ENCODE measurements at regions of chr1 and their contacts with region 1.

Region 1: GRCh38 chr1:182604169-182605164 is at the start of gene RGS16:
- DNase-seq: peak; percentile 96
- H3K4me3 ChIP-seq: peak within 1 kb of the TSS; percentile 65
- H3K27ac ChIP-seq: peak within 1 kb of the TSS; percentile 39
- H3K4me1 ChIP-seq: peaks cover 48% of the 10 kb centered on the region
- H3K27me3 ChIP-seq: no peaks in the 10 kb centered on the region
- CTCF ChIP-seq: no peak
- total RNA-seq, gene RGS16: 22.1 and 23.1 TPM in 2 replicates

Region 2: DNA sequence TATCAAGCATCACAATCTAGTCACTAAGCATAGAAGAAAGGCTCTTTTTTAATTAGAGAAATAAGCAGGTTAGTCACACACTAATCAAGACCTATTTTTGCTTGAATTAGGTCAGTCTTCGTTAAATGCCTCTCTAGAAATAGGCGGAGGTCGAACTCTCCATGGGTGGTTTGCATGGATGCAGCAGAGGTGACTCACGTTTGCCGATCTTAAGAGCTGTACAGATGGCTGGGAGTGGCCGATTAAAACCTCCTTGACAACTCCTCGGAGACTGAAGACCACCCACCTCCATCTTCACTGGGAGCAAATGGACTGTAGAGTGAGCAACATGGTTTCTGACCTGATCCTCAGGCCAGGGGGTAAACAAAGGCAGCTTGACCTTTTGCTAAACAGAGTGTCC is 792.3 kb before region 1 on chr1:
- CTCF ChIA-PET with region 1: no interaction called
- POLR2A ChIA-PET with region 1: no interaction called
- intact Hi-C with region 1: no loop called
- DNase-seq: no peak
- H3K4me3 ChIP-seq: no peak overlapping the region
- H3K27ac ChIP-seq: no peak overlapping the region
- H3K4me1 ChIP-seq: no peaks in the 10 kb centered on the region
- H3K27me3 ChIP-seq: peaks cover 54% of the 10 kb centered on the region
- CTCF ChIP-seq: no peak

Region 3: DNA sequence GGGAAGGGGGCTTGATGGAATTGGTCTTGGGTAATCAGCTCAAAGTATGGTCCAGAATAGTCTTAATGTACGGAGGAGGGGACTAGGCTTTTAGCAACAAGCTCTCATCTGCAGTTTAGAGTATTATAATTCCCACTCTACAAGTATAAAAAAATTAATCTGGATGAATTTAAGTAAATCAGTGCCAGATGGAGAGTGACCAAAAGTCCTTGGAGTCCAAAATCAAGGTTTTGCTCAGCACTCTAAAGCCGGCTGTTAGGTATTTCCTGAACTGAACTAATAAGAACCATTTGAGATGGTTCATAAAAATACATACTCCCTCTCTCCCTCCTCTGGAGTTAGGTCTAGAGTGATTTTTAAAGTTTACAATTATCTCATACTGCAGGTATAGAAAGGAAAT is 236.5 kb before region 1 on chr1:
- CTCF ChIA-PET with region 1: no interaction called
- POLR2A ChIA-PET with region 1: no interaction called
- intact Hi-C with region 1: no loop called
- DNase-seq: no peak
- H3K4me3 ChIP-seq: no peak overlapping the region
- H3K27ac ChIP-seq: no peak overlapping the region
- H3K4me1 ChIP-seq: no peaks in the 10 kb centered on the region
- H3K27me3 ChIP-seq: peaks cover 30% of the 10 kb centered on the region
- CTCF ChIP-seq: no peak

Region 4: DNA sequence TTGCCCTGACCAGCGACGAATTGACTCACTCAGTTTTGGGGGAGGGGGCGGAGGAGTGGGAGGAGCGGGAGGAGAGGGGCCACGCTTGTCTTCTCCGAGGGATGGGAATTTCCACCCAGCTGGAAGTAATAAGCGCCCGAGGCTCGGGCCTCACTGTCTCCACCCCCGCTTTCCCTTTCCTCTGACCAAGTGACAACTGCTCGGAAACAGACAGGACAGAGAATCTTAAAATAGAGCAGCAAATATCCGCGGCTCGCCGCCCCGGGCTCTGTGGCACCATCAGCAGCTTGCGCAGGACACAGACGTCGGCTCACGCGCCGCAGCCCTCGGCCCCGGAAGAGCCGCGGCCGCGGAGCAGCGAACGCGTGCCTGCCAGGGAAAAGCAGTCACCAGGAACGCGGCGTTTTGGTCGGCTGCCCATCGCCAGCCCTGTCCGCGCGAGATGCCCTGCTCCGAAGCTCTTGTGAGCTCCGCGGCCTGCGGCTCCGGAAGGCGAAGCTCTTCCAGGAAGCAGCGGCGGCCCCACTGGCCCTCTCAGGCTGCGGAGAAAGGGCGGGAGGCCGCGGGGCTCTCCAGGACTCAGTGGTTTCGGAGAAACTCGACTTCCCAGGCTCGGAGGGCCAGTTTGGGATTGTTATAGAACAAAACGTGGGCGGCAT is 10.5 kb after region 1 on chr1:
- CTCF ChIA-PET with region 1: interaction called, 3 read pairs
- POLR2A ChIA-PET with region 1: interaction called, 14 read pairs
- intact Hi-C with region 1: loop called (anchors 1 kb)
- DNase-seq: peak; percentile 97
- H3K4me3 ChIP-seq: peak overlapping the region; percentile 50
- H3K27ac ChIP-seq: peak overlapping the region; percentile 100
- H3K4me1 ChIP-seq: peaks cover 81% of the 10 kb centered on the region
- H3K27me3 ChIP-seq: no peaks in the 10 kb centered on the region
- CTCF ChIP-seq: peak; percentile 32; the same call in 1 of the 2 replicates

Region 5: DNA sequence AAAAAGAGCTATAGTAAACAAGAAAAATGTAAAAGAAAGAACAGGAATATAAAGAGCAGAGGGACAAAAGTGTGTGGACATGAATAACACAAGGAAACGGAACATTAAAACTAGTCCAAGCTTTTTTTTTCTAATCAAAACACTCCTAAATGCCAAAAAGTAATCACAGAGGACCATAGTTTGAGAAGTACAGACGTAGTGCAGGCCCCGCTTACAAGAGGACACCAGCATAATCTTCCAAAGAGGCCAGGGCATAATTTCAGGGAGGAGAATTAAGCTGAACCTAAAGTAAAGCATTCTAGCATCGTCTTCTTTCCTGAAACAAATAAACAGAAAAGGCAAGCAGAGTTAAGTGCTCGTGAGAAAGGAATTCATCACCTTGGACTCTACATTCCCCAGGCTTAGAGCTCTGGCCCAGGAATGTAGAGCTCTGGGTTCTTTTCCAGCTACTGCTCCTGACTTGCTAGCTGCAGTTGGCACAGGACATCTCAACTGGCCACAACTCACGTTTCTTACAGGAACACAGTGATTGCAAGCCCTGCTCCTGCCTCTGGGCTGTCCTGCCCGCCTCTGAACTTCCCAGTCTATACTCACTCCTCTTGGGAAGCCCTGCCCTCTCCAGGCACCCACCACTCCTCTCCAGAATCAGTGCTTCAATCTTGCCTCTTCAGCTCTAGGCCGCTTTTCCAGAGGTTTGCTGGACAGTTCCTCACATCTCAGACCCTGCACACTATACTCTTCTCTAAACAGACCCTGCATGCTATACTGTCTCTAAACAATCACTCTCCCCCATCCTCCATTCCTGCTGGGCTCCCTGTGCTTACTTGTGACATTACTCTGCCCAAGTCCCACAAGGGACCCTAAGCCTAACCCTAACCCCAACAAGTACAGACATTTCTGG is 70.1 kb after region 1 on chr1:
- CTCF ChIA-PET with region 1: no interaction called
- POLR2A ChIA-PET with region 1: no interaction called
- intact Hi-C with region 1: loop called (anchors 5 kb)
- DNase-seq: no peak
- H3K4me3 ChIP-seq: no peak overlapping the region
- H3K27ac ChIP-seq: no peak overlapping the region
- H3K4me1 ChIP-seq: peaks cover 12% of the 10 kb centered on the region
- H3K27me3 ChIP-seq: no peaks in the 10 kb centered on the region
- CTCF ChIP-seq: no peak

Region 6: DNA sequence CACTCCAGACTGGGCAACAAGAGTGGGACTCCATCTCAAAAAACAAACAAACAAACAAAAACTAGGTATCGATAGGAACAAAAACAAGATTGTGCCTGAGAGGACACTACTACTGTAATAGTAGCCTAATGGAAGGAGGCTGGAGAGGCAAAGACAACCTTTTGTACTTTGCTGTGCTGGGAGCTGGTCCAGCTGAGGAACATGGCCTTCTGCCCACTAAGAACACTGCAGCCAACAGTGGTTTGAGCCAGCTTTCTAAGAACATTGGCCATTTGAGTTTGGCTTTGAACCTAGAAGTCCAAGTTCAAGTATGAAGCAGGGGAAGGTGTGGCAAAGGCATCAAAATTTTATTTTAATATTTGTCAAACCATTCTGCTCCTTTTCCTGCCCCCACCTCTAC is 102.7 kb after region 1 on chr1:
- CTCF ChIA-PET with region 1: no interaction called
- POLR2A ChIA-PET with region 1: no interaction called
- intact Hi-C with region 1: no loop called
- DNase-seq: no peak
- H3K4me3 ChIP-seq: no peak overlapping the region
- H3K27ac ChIP-seq: no peak overlapping the region
- H3K4me1 ChIP-seq: no peaks in the 10 kb centered on the region
- H3K27me3 ChIP-seq: no peaks in the 10 kb centered on the region
- CTCF ChIP-seq: no peak

Region 7: DNA sequence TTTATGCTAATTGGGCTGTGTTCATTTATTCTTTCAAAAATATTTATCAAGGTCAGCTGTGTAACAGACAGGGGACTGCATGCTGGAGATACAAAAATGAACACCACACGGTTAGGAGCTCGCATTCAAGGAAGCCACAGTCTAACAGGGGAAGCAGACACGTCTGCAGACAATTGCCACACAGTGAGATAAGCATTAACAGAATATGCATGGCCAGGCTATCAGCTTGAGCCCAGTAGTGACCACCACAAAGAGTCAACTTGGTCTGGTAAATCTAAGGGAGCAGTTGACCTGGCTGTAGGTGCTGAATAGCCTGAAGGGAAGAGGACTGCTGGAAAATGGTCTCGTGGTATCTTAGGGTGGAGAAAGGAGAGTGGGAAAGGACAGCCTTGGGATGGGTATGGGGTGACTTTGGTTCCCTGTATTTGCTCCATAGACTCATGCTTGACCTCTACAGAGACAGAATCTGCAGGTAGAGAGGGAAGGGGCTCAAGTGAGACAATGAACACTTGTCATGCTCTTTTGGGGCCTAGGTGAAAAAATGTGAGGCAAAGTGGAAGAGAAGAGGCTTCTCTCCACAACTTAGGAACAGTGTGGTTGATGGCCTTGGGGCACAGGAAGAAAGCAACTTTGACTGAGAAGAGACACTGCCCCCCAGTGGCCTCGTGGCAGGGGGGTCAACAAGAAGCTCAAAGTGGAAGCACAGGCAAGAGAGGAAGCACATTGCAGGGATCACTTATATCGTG is 177.5 kb after region 1 on chr1:
- CTCF ChIA-PET with region 1: interaction called, 40 read pairs
- POLR2A ChIA-PET with region 1: no interaction called
- intact Hi-C with region 1: loop called (anchors 1 kb)
- DNase-seq: peak; percentile 80
- H3K4me3 ChIP-seq: no peak overlapping the region
- H3K27ac ChIP-seq: no peak overlapping the region
- H3K4me1 ChIP-seq: no peaks in the 10 kb centered on the region
- H3K27me3 ChIP-seq: no peaks in the 10 kb centered on the region
- CTCF ChIP-seq: peak; percentile 84

Measured in A673 (cell line).